ENCODE measurements at regions of chr10 and their contacts with region 1.

Region 1: DNA sequence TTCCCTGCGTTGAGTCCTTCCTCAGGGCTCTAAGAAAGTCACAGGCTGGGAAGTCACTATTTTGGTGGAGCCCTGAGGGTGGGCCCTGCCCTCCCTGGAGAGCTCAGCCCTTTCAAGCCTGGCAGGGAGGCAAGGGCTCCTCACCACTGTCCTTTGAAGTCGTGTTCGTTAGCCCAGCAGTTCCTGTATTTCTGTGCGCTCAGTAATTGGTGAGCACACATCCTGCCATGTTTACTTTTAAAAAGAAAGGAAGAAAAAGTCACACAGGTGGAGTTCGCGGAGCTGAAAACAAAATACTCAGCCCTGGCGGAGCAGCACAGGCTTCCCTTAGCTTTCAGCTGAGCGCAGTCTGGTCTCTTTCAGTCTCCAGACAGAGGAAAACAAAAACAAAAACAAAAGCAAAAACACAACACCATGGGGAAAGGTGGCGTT is 37.1 kb downstream of the PRKCQ start:
- DNase-seq: peak; percentile 70 to 81 (median 78)
- H3K4me3 ChIP-seq: peak overlapping the region in 1 of 2 donors; percentile 30
- H3K4me3 Mint-ChIP-seq: peak overlapping the region; percentile 88 to 98 (median 93)
- H3K27ac ChIP-seq: peak overlapping the region; percentile 66
- H3K27ac Mint-ChIP-seq: peak overlapping the region; percentile 96 to 100 (median 99)
- H3K4me1 ChIP-seq: peaks cover 83% of the 10 kb centered on the region
- H3K4me1 Mint-ChIP-seq: peaks cover 67 to 86% (median 77%) of the 10 kb centered on the region in 4 donors
- H3K27me3 ChIP-seq: no peaks in the 10 kb centered on the region
- H3K27me3 Mint-ChIP-seq: no peaks in the 10 kb centered on the region

Region 2: GRCh38 chr10:6498771-6499170 is 44.2 kb before region 1 on chr10:
- CTCF ChIA-PET with region 1: interaction called, 5 read pairs
- POLR2A ChIA-PET with region 1: interaction called, 21 read pairs
- intact Hi-C with region 1: loop called (anchors 2 kb)
- DNase-seq: peak; percentile 62 to 83 (median 74)
- H3K4me3 ChIP-seq: peak overlapping the region in 1 of 2 donors; percentile 4
- H3K4me3 Mint-ChIP-seq: peak overlapping the region in 7 of 8 donors; percentile 39 to 87 (median 75)
- H3K27ac ChIP-seq: peak overlapping the region; percentile 59
- H3K27ac Mint-ChIP-seq: peak overlapping the region in 6 of 7 donors; percentile 91 to 96 (median 95)
- H3K4me1 ChIP-seq: peaks cover 65% of the 10 kb centered on the region
- H3K4me1 Mint-ChIP-seq: peaks cover 40 to 49% (median 48%) of the 10 kb centered on the region in 4 donors
- H3K27me3 ChIP-seq: no peaks in the 10 kb centered on the region
- H3K27me3 Mint-ChIP-seq: no peaks in the 10 kb centered on the region

Region 3: GRCh38 chr10:6514844-6515780 is 27.9 kb before region 1 on chr10:
- CTCF ChIA-PET with region 1: interaction called, 9 read pairs
- POLR2A ChIA-PET with region 1: interaction called, 14 read pairs
- intact Hi-C with region 1: loop called (anchors 1 kb)
- DNase-seq: no peak
- H3K4me3 ChIP-seq: no peak overlapping the region
- H3K4me3 Mint-ChIP-seq: peak overlapping the region in 1 of 8 donors; percentile 11
- H3K27ac ChIP-seq: no peak overlapping the region
- H3K27ac Mint-ChIP-seq: peak overlapping the region in 6 of 7 donors; percentile 21 to 83 (median 68)
- H3K4me1 ChIP-seq: peaks cover 78% of the 10 kb centered on the region
- H3K4me1 Mint-ChIP-seq: peaks cover 63 to 94% (median 75%) of the 10 kb centered on the region in 4 donors
- H3K27me3 ChIP-seq: no peaks in the 10 kb centered on the region
- H3K27me3 Mint-ChIP-seq: no peaks in the 10 kb centered on the region

Region 4: GRCh38 chr10:6553937-6554336 is 10.9 kb after region 1 on chr10:
- CTCF ChIA-PET with region 1: interaction called, 13 read pairs
- POLR2A ChIA-PET with region 1: interaction called, 136 read pairs
- intact Hi-C with region 1: loop called (anchors 1 kb)
- DNase-seq: no peak
- H3K4me3 ChIP-seq: no peak overlapping the region
- H3K4me3 Mint-ChIP-seq: peak overlapping the region in 2 of 8 donors; percentile 33 to 48
- H3K27ac ChIP-seq: no peak overlapping the region
- H3K27ac Mint-ChIP-seq: peak overlapping the region in 5 of 7 donors; percentile 6 to 93 (median 79)
- H3K4me1 ChIP-seq: peaks cover 69% of the 10 kb centered on the region
- H3K4me1 Mint-ChIP-seq: peaks cover 70 to 94% (median 81%) of the 10 kb centered on the region in 4 donors
- H3K27me3 ChIP-seq: no peaks in the 10 kb centered on the region
- H3K27me3 Mint-ChIP-seq: no peaks in the 10 kb centered on the region

Region 5: DNA sequence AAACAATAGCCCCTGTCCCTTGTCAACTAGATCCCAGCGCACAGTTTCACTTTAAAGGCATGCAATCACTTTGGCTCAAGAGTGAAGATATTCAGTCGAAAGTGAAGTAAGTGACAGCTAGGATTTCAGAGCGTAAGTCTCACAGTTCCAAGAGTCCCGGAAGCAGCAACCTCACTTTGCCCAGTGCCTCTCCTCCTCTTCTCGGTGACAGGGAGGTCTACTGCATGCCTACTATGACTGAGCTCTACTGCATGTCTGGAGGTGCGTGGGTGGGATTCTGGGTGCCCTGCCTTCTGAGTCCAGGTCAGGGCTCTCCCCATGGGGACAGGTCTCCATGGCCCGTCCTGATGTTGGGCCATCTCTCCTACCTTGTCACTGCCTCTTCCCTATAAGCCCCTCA is 20.1 kb after region 1 on chr10:
- CTCF ChIA-PET with region 1: interaction called, 13 read pairs
- POLR2A ChIA-PET with region 1: interaction called, 136 read pairs
- intact Hi-C with region 1: loop called (anchors 1 kb)
- DNase-seq: peak in 2 of 5 donors; percentile 35 to 62
- H3K4me3 ChIP-seq: peak overlapping the region in 1 of 2 donors; percentile 21
- H3K4me3 Mint-ChIP-seq: peak overlapping the region; percentile 68 to 90 (median 79)
- H3K27ac ChIP-seq: peak overlapping the region; percentile 56
- H3K27ac Mint-ChIP-seq: peak overlapping the region; percentile 85 to 94 (median 90)
- H3K4me1 ChIP-seq: peaks cover 98% of the 10 kb centered on the region
- H3K4me1 Mint-ChIP-seq: peaks cover 79 to 94% (median 88%) of the 10 kb centered on the region in 4 donors
- H3K27me3 ChIP-seq: no peaks in the 10 kb centered on the region
- H3K27me3 Mint-ChIP-seq: no peaks in the 10 kb centered on the region

Region 6: GRCh38 chr10:6570893-6571292 is 27.9 kb after region 1 on chr10:
- CTCF ChIA-PET with region 1: interaction called, 4 read pairs
- POLR2A ChIA-PET with region 1: interaction called, 136 read pairs
- intact Hi-C with region 1: no loop called
- DNase-seq: no peak
- H3K4me3 ChIP-seq: no peak overlapping the region
- H3K4me3 Mint-ChIP-seq: peak overlapping the region in 5 of 8 donors; percentile 49 to 64 (median 53)
- H3K27ac ChIP-seq: no peak overlapping the region
- H3K27ac Mint-ChIP-seq: peak overlapping the region; percentile 31 to 90 (median 84)
- H3K4me1 ChIP-seq: peaks cover 98% of the 10 kb centered on the region
- H3K4me1 Mint-ChIP-seq: peaks cover 82 to 97% (median 90%) of the 10 kb centered on the region in 4 donors
- H3K27me3 ChIP-seq: no peaks in the 10 kb centered on the region
- H3K27me3 Mint-ChIP-seq: no peaks in the 10 kb centered on the region

Region 7: DNA sequence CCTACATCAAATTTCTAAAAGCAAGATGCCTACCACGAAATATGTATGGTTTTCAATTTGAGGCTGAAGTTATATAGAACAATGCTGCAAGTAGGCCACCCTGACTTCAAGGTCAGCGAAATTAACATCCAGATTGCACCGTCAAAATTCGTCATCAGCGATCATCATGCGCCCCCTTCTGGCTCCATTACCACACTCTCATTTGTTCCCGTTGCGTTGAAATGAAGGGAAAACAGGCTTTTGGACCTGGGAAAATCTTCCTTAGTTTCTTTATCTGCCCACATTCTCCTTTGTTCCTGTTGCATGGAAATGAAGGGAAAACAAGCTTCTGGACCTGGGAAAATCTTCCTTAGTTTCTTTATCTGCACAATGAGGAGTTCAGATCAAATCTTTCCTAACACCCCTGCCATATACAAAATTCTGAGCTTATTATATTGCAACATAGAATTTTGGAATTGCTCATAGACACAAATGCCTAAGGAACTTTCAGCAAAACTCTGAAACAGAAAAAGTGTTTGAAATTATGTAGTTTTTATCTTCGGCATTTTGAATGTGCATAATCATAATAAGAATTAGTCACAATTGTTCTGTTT is 135.3 kb after region 1 on chr10:
- CTCF ChIA-PET with region 1: no interaction called
- POLR2A ChIA-PET with region 1: no interaction called
- intact Hi-C with region 1: no loop called
- DNase-seq: peak; percentile 53 to 59 (median 55)
- H3K4me3 ChIP-seq: no peak overlapping the region
- H3K4me3 Mint-ChIP-seq: no peak overlapping the region
- H3K27ac ChIP-seq: no peak overlapping the region
- H3K27ac Mint-ChIP-seq: peak overlapping the region in 1 of 7 donors; percentile 52
- H3K4me1 ChIP-seq: no peaks in the 10 kb centered on the region
- H3K4me1 Mint-ChIP-seq: peaks cover 0 to 6% (median 5%) of the 10 kb centered on the region in 4 donors
- H3K27me3 ChIP-seq: peaks cover 3% of the 10 kb centered on the region
- H3K27me3 Mint-ChIP-seq: peaks cover 4 to 9% of the 10 kb centered on the region in 2 donors

Measured in CD4-positive, alpha-beta memory T cell (primary cell).